OCI-LY7 (cell line): ENCODE measurements at regions of chr7 and their contacts with region 1.

Region 1: GRCh38 chr7:148385009-148385682 is 205.4 kb upstream of the C7orf33 start:
- DNase-seq: no peak
- H3K4me3 ChIP-seq: no peak overlapping the region
- H3K27ac ChIP-seq: no peak overlapping the region
- H3K4me1 ChIP-seq: no peaks in the 10 kb centered on the region
- CTCF ChIP-seq: no peak

Region 2: DNA sequence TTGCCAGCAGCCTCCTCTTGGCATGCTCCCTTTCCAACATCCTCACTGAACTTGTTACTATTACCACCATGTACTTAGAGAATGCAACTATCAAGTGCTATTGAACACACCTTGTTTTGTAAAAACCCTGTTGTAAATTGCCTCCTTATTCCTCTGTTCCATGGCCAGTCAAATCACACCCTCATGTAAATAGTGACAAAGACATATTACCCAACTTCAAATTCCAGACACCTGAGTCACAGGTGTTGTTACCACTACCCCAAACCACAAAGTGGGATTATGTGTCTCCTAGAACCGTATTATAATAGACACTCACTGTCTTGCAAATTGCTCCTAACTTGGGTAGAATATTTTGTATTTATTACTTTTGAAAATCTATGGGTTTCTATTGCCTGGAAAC is 57.8 kb before region 1 on chr7:
- CTCF ChIA-PET with region 1: no interaction called
- POLR2A ChIA-PET with region 1: no interaction called
- intact Hi-C with region 1: no loop called
- DNase-seq: no peak
- H3K4me3 ChIP-seq: no peak overlapping the region
- H3K27ac ChIP-seq: no peak overlapping the region
- H3K4me1 ChIP-seq: no peaks in the 10 kb centered on the region
- CTCF ChIP-seq: no peak

Region 3: DNA sequence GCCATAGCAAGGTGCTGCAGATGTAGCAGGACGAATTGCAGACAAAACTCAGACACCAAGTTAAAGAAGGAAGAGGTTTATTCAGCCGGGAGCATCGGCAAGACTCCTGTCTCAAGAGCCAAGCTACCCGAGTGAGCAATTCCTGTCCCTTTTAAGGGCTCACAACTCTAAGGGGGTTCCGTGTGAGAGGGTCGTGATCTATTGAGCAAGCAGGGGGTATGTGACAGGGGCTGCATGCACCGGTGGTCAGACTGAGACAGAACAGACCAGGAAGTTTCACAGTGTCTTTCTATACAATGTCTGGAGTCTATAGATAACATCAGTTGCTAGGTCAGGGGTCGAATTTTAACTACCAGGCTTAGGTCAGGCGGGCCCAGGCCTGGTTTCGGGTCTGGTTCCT is 16.6 kb before region 1 on chr7:
- CTCF ChIA-PET with region 1: no interaction called
- POLR2A ChIA-PET with region 1: interaction called, 10 read pairs
- intact Hi-C with region 1: no loop called
- DNase-seq: no peak
- H3K4me3 ChIP-seq: no peak overlapping the region
- H3K27ac ChIP-seq: no peak overlapping the region
- H3K4me1 ChIP-seq: no peaks in the 10 kb centered on the region
- CTCF ChIP-seq: no peak